Natural killer cell (primary cell): ENCODE measurements at regions of chr2 and their contacts with region 1.

Region 1: DNA sequence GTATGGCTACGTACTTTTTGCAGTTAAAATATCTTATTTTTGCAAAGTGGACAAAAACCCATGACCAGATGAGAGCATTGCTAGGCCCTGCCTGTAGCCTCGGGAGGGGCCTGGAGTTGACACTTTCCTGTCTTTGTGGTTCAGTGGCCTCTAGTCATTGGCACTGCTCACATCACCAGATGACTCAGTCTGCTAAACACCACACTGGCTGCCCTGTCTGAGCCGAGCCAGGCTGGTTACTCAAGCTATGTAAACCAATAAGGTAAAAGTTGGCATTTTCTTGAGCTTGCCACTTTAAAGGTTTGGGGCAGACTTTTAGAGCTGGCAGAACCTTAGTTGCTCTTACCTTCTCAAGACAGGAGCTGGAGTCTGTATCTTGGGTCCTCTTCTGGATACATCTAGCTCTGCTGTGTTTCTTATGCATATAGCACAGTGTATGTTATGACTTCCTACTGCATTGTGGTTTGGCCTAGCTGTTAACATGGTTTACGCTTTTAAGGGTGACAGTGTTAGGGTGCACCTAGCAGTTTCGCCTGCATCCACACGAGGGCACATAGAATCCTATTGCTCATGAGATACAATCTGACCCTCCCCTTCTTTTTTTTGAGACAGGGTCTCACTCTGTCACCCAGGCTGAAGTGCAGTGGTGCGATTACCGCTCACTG is 76.4 kb downstream of the AP1S3 start:
- DNase-seq: peak; percentile 76 to 80
- ATAC-seq: peak; percentile 83 to 93 (median 89)
- H3K4me3 ChIP-seq: peak overlapping the region; percentile 27
- H3K4me3 Mint-ChIP-seq: peak overlapping the region; percentile 86
- H3K27ac ChIP-seq: peak overlapping the region; percentile 95
- H3K27ac Mint-ChIP-seq: peak overlapping the region; percentile 96 to 97
- H3K4me1 ChIP-seq: peaks cover 35% of the 10 kb centered on the region
- H3K4me1 Mint-ChIP-seq: peaks cover 30 to 39% of the 10 kb centered on the region in 2 donors
- H3K27me3 ChIP-seq: no peaks in the 10 kb centered on the region
- H3K27me3 Mint-ChIP-seq: no peaks in the 10 kb centered on the region
- CTCF ChIP-seq: peak; percentile 62

Region 2: DNA sequence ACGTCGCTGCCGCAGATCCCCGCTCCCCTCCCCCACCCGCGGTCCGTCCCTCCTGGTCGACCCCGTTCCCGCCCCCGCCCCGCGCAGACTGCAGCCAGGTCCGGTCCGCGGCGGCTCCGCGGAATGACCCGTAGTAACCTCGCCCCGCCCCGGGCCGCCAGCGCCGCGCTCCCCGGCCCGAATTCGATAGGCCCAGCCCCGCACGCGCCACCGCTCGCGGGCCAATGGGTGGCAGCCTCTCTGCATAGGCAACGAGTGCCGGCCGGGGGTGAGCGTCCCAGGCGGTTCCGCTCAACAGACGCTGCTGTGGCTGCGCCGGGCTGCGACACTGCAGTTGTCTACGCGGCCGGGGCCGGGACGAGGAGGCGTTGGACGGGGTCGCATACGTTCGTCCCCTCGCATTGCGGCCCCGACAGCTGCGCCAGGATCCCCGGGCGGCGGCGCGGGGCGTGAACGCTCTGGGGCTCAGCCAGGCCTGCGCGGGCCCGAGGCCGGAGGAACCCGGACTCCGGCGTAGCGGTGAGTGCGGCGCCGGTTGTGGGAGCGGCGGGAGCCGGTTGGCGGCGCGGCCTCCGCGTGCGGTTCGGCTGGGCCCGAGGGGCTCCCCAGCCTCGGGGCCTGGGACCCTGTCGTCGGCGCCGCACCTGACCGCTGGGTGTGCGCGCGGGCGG is 900.1 kb before region 1 on chr2 and contains the start of gene ACSL3:
- intact Hi-C with region 1: loop called (anchors 2 kb)
- DNase-seq: peak; percentile 91 to 93
- ATAC-seq: peak; percentile 93 to 99 (median 96)
- H3K4me3 ChIP-seq: peak within 1 kb of the TSS; percentile 70
- H3K4me3 Mint-ChIP-seq: peak within 1 kb of the TSS; percentile 85
- H3K27ac ChIP-seq: peak within 1 kb of the TSS; percentile 78
- H3K27ac Mint-ChIP-seq: peak within 1 kb of the TSS in 1 of 2 donors; percentile 72
- H3K4me1 ChIP-seq: peaks cover 9% of the 10 kb centered on the region
- H3K4me1 Mint-ChIP-seq: peaks cover 6 to 8% of the 10 kb centered on the region in 2 donors
- H3K27me3 ChIP-seq: no peaks in the 10 kb centered on the region
- H3K27me3 Mint-ChIP-seq: peaks cover 3 to 8% of the 10 kb centered on the region in 2 donors
- CTCF ChIP-seq: no peak
- total RNA-seq, gene ACSL3: 55.4 to 86.6 (median 66.7) TPM

Region 3: DNA sequence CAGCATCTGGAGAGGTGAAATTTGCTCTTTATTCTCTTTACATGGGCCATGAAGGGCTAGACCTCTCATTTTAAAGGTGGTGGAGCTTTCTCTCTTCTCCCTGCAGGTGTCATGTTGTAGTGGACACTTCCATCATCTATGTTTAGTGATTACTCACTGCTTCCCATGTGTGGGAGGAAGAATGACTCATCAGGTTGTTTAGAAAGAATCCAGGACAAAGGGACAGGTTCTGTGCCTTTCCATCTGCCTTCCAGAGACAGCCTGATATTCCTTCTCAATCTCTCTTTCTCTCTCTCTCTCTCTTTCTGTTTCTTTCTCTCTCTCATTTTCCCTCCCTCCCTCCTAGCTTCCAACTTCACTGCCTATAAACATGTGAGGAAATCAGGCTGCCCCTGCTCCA is 197.5 kb before region 1 on chr2:
- intact Hi-C with region 1: no loop called
- DNase-seq: no peak
- ATAC-seq: no peak
- H3K4me3 ChIP-seq: no peak overlapping the region
- H3K4me3 Mint-ChIP-seq: no peak overlapping the region
- H3K27ac ChIP-seq: no peak overlapping the region
- H3K27ac Mint-ChIP-seq: no peak overlapping the region
- H3K4me1 ChIP-seq: no peaks in the 10 kb centered on the region
- H3K4me1 Mint-ChIP-seq: no peaks in the 10 kb centered on the region
- H3K27me3 ChIP-seq: no peaks in the 10 kb centered on the region
- H3K27me3 Mint-ChIP-seq: peaks cover 0 to 6% of the 10 kb centered on the region in 2 donors
- CTCF ChIP-seq: no peak

Region 4: GRCh38 chr2:223744573-223744972 is 16.4 kb before region 1 on chr2:
- intact Hi-C with region 1: no loop called
- DNase-seq: no peak
- ATAC-seq: no peak
- H3K4me3 ChIP-seq: no peak overlapping the region
- H3K4me3 Mint-ChIP-seq: no peak overlapping the region
- H3K27ac ChIP-seq: no peak overlapping the region
- H3K27ac Mint-ChIP-seq: no peak overlapping the region
- H3K4me1 ChIP-seq: no peaks in the 10 kb centered on the region
- H3K4me1 Mint-ChIP-seq: peaks cover 0 to 6% of the 10 kb centered on the region in 2 donors
- H3K27me3 ChIP-seq: no peaks in the 10 kb centered on the region
- H3K27me3 Mint-ChIP-seq: peaks cover 2 to 6% of the 10 kb centered on the region in 2 donors
- CTCF ChIP-seq: no peak

Region 5: DNA sequence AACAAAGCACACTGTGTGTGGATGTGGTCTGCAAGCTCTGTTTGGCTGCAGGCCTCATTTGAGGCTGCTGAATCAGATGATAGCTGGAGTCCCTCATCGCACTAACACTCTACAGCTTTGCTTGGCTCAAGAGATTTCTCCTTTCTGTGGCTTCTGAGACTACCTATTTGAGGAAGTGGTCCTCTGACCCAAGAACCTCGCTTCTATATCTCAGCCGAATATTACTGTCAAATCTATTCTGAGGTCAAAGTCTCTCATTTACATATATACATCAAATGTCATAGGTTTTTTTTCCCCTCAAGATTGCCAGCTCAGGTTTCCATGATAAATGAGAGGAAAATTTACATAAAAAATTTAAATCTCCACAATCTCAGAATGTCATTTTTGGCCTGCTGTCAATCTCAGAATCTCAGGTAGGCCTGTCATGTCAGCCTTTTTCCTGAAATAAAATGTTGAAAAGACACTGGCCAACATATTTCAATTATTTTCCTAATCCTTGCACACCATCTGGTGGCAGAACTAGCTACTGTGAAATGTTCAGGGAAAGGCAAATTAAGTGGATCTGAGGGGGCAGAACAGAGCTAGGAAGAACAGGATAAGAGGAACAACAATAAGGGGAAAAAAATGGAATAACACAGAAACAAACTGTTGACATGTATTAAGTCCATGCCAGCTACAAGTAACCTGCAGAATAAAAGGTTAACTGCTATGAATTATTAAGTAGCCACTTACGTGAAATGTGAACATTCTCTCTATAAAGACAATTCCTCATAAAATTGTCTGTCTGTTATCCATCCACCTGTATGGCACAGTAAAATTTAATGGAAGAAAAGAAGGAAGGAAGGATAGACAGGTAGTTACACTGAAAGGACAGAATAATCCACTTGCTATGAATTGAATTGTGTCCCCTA is 37.1 kb after region 1 on chr2:
- intact Hi-C with region 1: loop called (anchors 2 kb)
- DNase-seq: peak in 1 of 2 donors; percentile 42
- ATAC-seq: peak; percentile 41 to 73 (median 64)
- H3K4me3 ChIP-seq: no peak overlapping the region
- H3K4me3 Mint-ChIP-seq: no peak overlapping the region
- H3K27ac ChIP-seq: no peak overlapping the region
- H3K27ac Mint-ChIP-seq: no peak overlapping the region
- H3K4me1 ChIP-seq: peaks cover 3% of the 10 kb centered on the region
- H3K4me1 Mint-ChIP-seq: peaks cover 0 to 5% of the 10 kb centered on the region in 2 donors
- H3K27me3 ChIP-seq: no peaks in the 10 kb centered on the region
- H3K27me3 Mint-ChIP-seq: no peaks in the 10 kb centered on the region
- CTCF ChIP-seq: peak; percentile 72

Region 6: GRCh38 chr2:223865907-223866508 is 105.0 kb after region 1 on chr2:
- intact Hi-C with region 1: loop called (anchors 1 kb)
- DNase-seq: peak in 1 of 2 donors; percentile 41
- ATAC-seq: peak; percentile 78 to 88 (median 79)
- H3K4me3 ChIP-seq: no peak overlapping the region
- H3K4me3 Mint-ChIP-seq: peak overlapping the region; percentile 66
- H3K27ac ChIP-seq: peak overlapping the region; percentile 52
- H3K27ac Mint-ChIP-seq: peak overlapping the region; percentile 74 to 80
- H3K4me1 ChIP-seq: peaks cover 22% of the 10 kb centered on the region
- H3K4me1 Mint-ChIP-seq: peaks cover 23 to 29% of the 10 kb centered on the region in 2 donors
- H3K27me3 ChIP-seq: no peaks in the 10 kb centered on the region
- H3K27me3 Mint-ChIP-seq: no peaks in the 10 kb centered on the region
- CTCF ChIP-seq: no peak

Region 7: DNA sequence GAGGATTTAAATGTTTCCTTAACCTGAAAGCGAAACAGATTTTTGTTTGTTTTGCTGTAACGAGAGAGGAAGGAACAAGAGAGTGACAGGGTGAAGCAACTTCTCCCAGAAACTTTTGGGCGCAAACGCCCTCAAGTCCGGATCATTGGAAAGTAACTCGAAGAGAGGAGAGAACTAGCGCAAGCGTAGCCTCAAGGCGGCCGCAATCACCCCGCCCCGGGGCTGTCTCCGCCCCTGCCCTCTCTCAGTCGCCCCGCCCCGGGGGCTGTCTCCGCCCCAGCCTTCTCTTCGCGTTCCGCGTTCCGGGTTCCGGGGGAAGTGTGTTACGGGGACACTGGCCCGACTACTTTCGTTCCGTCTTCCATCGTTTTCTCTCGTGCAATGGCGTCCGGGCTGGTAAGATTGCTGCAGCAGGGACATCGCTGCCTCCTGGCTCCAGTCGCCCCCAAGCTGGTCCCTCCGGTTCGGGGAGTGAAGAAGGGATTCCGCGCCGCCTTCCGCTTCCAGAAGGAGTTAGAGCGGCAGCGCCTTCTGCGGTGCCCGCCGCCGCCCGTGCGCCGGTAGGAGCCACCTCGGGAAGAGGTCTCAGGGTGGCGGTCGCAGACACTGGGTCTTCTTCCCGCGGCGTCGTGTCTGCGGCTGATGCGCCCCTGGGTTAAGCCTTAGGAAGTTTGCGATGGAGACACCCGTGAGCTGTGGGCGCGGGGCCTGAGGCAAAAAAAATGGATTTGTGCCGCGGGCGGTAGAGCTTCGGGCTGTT is 196.3 kb after region 1 on chr2 and contains the start of gene MRPL44:
- intact Hi-C with region 1: loop called (anchors 2 kb)
- DNase-seq: peak; percentile 98
- ATAC-seq: peak; percentile 99 to 100 (median 100)
- H3K4me3 ChIP-seq: peak within 1 kb of the TSS; percentile 97
- H3K4me3 Mint-ChIP-seq: peak within 1 kb of the TSS; percentile 97
- H3K27ac ChIP-seq: peak within 1 kb of the TSS; percentile 79
- H3K27ac Mint-ChIP-seq: peak within 1 kb of the TSS; percentile 93 to 95
- H3K4me1 ChIP-seq: peaks cover 16% of the 10 kb centered on the region
- H3K4me1 Mint-ChIP-seq: peaks cover 46 to 56% of the 10 kb centered on the region in 2 donors
- H3K27me3 ChIP-seq: no peaks in the 10 kb centered on the region
- H3K27me3 Mint-ChIP-seq: no peaks in the 10 kb centered on the region
- CTCF ChIP-seq: no peak
- total RNA-seq, gene MRPL44: 27.6 to 35.1 (median 31.0) TPM

Region 8: DNA sequence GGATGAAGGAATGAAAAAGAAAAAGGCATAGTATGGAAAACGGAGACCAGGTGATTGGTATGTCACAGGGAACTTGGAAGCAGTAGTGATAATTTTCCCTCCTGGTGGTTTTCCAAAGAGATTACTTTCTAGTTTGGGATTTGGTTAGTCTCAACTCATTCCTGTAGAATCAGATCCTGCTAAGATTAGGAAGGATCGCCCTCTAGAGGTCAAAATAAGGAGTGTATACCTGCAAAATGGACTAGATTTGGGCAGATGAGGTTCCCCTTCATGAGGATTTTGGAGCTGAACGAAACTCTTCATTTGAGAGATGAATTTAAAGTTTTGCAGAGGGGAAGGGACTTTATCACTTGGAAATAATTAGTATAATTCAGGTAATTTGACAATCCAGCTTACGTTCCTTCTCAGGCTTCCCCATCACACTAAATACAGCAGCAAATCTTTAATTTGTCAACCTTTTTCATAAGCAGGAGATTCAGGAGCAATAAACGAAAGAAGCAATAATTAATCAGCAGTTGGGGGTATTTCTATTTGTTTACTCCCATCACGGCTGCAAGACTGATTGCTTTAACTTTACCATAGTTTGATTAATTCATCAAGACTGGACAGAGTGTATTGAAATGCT is 890.0 kb after region 1 on chr2:
- intact Hi-C with region 1: no loop called
- DNase-seq: peak in 1 of 2 donors; percentile 75
- ATAC-seq: peak; percentile 60 to 71 (median 63)
- H3K4me3 ChIP-seq: no peak overlapping the region
- H3K4me3 Mint-ChIP-seq: no peak overlapping the region
- H3K27ac ChIP-seq: no peak overlapping the region
- H3K27ac Mint-ChIP-seq: no peak overlapping the region
- H3K4me1 ChIP-seq: no peaks in the 10 kb centered on the region
- H3K4me1 Mint-ChIP-seq: no peaks in the 10 kb centered on the region
- H3K27me3 ChIP-seq: no peaks in the 10 kb centered on the region
- H3K27me3 Mint-ChIP-seq: peaks cover 6% of the 10 kb centered on the region in 2 donors
- CTCF ChIP-seq: peak; percentile 77